ENCODE measurements at regions of chr15 and their contacts with region 1.

Region 1: DNA sequence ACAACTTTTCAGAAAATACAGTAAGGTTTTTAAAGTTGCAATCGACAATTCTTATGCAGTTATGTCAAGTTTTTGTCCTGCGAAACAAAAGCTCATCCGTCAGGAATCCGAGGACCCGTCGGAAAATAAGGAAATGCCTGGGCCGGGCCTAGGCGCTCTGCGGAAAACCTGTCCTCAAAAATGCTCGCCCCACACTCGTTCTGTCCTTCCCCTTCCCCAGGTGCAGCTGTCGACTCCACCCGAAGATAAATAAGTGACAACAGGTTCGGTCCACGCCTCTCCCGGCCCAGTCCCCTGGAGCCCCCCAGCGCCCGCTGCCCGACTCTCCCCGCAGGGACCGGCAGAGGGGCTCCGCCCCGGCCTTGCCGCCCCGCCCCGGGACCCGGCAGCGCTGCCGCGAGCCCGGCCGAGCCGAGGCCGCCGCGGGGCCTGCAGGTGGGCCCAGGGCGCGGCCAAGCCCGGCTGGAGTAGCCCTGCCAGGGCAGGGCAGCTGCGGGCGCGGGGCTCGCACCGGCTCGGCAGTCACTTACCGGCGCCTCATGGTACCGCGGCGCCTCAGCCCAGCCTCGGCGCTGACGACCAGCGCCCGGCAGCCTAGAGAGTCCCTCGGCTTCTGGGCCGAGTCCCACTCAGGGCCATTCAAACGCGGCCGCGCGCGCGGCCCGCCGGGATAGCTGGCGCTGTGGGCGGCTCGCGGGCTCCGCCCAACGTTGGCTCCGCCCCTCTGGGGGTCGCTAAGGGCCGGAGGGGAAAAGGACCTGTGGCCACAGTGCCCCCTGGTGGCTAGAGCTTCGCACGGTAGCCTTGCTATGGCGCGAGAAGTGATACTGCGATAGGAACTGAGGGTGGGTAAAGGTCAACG is at the start of gene KATNBL1:
- DNase-seq: peak; percentile 98
- ATAC-seq: peak; percentile 100
- total RNA-seq, gene KATNBL1: 16.8 TPM

Region 2: DNA sequence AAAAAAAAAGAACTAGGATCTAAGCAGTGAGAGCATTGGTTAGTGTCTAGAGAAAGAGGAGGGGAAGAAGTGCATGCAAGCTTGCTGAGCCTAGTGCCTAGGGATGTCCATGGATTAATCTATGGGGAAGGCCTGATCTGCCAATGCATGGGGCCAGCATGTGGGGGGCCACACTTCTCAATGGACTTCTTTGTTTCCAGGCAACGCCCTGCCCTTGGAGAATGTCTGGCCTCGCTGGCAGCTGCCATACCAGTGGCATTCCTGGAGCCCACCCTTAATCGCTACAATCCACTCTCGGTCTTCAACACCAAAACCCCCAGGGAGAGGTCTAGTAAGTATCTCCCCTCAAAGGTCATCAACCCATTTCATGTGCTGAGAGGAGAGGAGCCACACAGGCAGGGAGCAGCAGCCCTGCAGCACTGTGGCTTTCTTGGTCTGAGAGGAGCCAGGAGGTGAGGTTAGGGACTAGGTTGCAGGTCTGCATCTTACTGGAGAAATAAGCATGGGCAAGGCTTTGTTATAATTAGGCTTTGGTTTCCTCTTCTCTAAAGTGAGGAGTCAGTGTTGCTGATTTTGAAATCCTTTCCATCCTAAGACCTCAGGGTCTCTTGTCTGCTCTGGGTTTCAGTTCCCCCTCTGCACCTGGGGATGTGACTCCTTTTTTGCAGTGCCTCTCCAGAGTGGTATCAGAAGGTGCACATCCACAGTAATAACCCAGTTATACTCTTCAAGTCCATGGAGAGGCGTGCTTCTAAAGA is 429.5 kb before region 1 on chr15:
- intact Hi-C with region 1: no loop called
- DNase-seq: no peak
- ATAC-seq: no peak

Region 3: GRCh38 chr15:34059946-34060345 is 149.7 kb before region 1 on chr15:
- intact Hi-C with region 1: loop called (anchors 2 kb)
- DNase-seq: no peak
- ATAC-seq: no peak

Region 4: GRCh38 chr15:34101366-34102175 is 108.1 kb before region 1 on chr15 and contains the starts of genes EMC7 and PGBD4:
- intact Hi-C with region 1: no loop called
- DNase-seq: peak; percentile 99
- ATAC-seq: peak; percentile 100
- total RNA-seq, gene EMC7: 59.3 TPM
- total RNA-seq, gene PGBD4: 1.3 TPM

Region 5: GRCh38 chr15:34279341-34279740 is 69.7 kb after region 1 on chr15:
- intact Hi-C with region 1: no loop called
- DNase-seq: no peak
- ATAC-seq: no peak